BJ (cell line): ENCODE measurements at regions of chr4 and their contacts with region 1.

Region 1: DNA sequence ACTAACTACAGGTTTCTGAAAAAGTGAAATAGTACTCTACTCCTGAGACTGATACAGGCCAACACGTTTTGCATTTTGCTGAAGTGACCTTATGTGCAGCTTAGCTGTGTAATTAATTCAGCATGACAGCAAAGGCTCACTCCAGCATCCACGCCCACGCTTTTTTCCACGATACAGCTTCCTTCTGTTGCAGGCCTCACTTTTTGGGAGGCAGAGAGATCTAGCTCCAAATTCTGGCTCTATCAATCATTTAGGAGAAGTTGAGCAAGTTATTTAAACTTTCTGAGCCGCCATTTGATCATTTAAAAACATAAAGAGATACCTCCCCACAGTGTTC is 160.3 kb downstream of the AFAP1 start:
- DNase-seq: no peak
- H3K4me3 ChIP-seq: no peak overlapping the region
- H3K27me3 ChIP-seq: no peaks in the 10 kb centered on the region
- CTCF ChIP-seq: no peak

Region 2: GRCh38 chr4:7328898-7329638 is 450.3 kb before region 1 on chr4:
- CTCF ChIA-PET with region 1: no interaction called
- POLR2A ChIA-PET with region 1: no interaction called
- DNase-seq: peak; percentile 22
- H3K4me3 ChIP-seq: no peak overlapping the region
- H3K27me3 ChIP-seq: peaks cover 1% of the 10 kb centered on the region
- CTCF ChIP-seq: 0 out of 2 replicates have a peak, but pooled peaks have one; percentile 23

Region 3: DNA sequence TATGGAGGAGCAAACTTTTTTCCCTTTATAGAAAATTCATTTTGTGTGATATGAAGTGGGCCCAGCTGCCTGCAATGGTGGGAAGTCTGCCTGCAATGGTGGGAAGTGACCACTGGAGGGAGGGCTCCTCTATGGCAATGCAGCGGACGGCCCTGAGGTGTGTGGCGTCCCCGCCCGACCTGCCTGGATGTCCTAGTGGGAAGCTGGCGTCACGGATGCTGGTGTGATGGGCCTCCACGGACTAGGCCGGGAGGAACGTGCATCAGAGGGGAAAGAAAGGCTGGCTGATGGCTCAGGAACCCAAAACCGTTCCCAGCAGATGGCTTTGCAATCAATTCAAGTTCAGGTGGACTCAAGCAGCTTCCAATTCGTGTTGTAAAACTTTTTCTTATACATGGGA is 17.7 kb before region 1 on chr4:
- CTCF ChIA-PET with region 1: interaction called, 11 read pairs
- POLR2A ChIA-PET with region 1: no interaction called
- DNase-seq: no peak
- H3K4me3 ChIP-seq: no peak overlapping the region
- H3K27me3 ChIP-seq: no peaks in the 10 kb centered on the region
- CTCF ChIP-seq: peak; percentile 78

Region 4: DNA sequence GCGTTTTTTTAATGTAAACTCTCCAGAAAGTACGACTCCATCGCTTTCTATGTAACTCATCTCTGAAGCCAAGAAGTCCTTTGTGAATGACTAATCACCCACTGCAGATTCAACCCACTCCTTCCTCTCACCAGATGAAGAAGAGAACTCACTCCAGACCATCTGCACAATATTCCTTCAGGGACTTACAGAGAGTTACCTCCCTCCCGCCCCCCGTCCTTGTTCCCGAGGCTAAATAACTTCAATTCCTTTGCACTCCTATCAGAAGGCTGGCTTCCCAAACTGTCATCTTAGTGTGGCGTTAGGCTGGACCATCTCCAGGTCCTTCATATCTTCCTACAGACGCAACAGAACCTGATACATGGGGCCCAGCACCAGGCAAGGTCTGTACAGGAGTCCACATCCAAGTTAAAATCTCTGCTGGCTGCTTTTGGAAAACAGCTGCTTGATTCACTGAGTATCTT is 77.9 kb after region 1 on chr4:
- CTCF ChIA-PET with region 1: no interaction called
- POLR2A ChIA-PET with region 1: no interaction called
- DNase-seq: peak; percentile 90
- H3K4me3 ChIP-seq: no peak overlapping the region
- H3K27me3 ChIP-seq: no peaks in the 10 kb centered on the region
- CTCF ChIP-seq: no peak